Breast epithelium (tissue), 4 donors: ENCODE measurements at regions of chr2 and their contacts with region 1.

Region 1: GRCh38 chr2:162734866-162735265 is 103.7 kb downstream of the KCNH7 start:
- DNase-seq: no peak
- H3K4me3 ChIP-seq: no peak overlapping the region
- H3K27ac ChIP-seq: no peak overlapping the region
- H3K4me1 ChIP-seq: no peaks in the 10 kb centered on the region
- H3K27me3 ChIP-seq: no peaks in the 10 kb centered on the region
- CTCF ChIP-seq: no peak
- POLR2A ChIP-seq: no peak

Region 2: DNA sequence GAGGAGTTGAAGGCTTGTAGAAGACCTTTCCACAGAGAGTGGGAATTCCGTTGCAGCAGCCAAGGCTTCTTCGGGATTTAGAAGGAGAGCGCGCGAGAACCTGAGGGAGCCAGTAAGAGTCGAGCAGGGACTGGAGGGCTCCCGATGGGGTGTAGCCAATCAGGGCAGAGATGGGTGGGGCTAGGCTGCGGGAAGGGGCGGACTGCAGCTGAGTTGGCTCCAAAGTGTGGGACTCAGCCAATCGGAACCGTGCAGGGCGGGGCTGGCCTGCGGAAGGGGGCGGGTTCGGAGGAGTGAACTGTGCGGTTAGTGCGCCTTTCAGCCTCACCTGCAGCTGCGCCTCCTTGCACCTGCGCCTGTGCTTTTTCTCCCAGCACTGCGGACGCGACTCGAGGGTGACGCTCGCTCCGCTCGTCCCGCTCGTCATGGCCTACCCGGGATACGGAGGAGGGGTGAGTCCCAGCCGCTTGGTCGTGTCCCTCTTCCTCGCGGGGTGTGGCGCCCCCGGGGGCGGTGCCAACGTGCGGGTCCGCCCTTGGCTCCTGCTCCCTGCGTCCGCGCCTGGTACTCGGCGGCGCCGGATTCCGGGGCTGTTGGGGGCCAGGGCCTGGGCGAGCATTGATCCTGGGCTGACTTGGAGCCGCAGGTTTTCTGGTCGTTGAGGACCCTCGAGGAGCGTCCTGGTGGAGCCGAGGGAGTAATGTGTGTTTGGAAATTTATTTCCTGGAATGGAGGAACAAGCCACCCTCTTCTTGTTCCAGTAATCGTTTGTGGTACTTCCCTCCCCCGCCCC is 390.8 kb before region 1 on chr2 and contains the start of gene GCA:
- intact Hi-C with region 1: loop called (anchors 5 kb)
- DNase-seq: peak; percentile 97 to 98
- H3K4me3 ChIP-seq: peak within 1 kb of the TSS; percentile 78 to 86 (median 78)
- H3K27ac ChIP-seq: peak within 1 kb of the TSS; percentile 81 to 83
- H3K4me1 ChIP-seq: no peaks in the 10 kb centered on the region
- H3K27me3 ChIP-seq: no peaks in the 10 kb centered on the region
- CTCF ChIP-seq: peak in 1 of 3 donors; percentile 16
- POLR2A ChIP-seq: no peak
- total RNA-seq, gene GCA: 18.9 to 36.6 (median 24.6) TPM